ENCODE measurements at regions of chr11 and their contacts with region 1.

Region 1: DNA sequence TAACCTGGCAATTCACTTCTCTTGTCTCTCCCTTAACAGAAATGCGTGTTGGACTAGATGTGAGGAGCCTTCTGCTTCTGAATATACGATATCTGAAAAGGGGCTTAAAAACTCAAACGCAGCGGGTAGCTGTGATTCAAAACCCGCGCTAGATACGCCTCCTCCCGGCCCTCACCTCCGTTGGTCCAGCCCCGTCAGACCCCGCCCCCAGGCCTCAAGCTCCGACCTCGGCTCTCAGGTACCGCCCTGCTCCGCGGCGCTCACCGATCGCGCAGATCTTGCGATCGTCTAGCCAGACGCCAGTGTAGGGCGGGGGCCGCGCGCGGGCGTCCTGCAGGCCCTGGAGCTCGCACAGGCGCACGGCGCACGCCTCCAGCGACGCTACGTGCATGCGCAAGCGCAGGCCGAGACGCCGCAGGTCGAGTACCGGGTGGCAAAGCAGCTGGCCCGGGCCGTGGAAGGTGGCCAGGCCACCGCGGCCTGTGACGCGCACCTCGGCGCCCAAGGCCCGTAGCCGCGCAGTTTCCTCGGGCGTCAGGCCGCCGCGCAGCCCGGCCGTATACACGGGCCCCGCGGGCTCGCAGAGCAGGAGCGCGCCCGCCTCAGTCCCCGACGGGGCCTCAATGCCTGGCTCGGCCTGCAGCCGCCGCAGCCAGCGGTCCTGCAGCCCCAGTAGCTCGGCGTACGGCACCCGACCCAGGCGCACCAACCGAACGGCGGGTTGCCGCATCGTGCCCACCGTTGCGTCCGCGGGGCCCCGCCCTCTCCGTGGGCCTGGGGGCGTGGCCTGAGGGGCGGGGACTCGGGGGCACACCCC is at the start of gene LIPT2:
- DNase-seq: peak; percentile 99
- H3K4me3 ChIP-seq: peak within 1 kb of the TSS; percentile 84 to 99 (median 90)
- H3K27ac ChIP-seq: peak within 1 kb of the TSS; percentile 98 to 100 (median 99)
- H3K4me1 ChIP-seq: peaks cover 11 to 20% (median 14%) of the 10 kb centered on the region in 4 donors
- H3K27me3 ChIP-seq: no peaks in the 10 kb centered on the region
- CTCF ChIP-seq: peak in 1 of 3 experiments; percentile 17
- EP300 ChIP-seq: no peak
- POLR2A ChIP-seq: peak; percentile 37
- total RNA-seq, gene LIPT2: 2.2 to 6.7 (median 2.7) TPM

Region 2: DNA sequence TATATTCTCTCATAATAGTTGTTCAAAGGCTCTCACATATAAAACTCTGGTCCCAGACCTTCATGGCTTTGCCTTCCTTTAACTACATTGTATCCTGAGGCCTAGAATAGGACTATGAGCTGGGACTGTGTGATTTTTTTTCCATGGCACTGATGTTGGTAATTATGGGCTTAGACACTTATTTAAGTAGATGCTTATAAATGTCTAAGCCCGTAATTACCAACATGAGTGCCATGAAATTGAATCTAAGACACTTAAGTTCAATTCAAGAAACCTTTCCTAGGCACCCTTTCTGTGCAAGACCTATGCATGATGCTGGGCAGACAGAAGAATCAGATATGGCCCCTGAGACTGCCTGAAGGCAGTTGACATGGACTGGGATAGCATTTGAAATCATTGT is 244.7 kb before region 1 on chr11:
- intact Hi-C with region 1: no loop called
- DNase-seq: peak; percentile 47
- H3K4me3 ChIP-seq: no peak overlapping the region
- H3K27ac ChIP-seq: no peak overlapping the region
- H3K4me1 ChIP-seq: no peaks in the 10 kb centered on the region
- H3K27me3 ChIP-seq: no peaks in the 10 kb centered on the region
- CTCF ChIP-seq: no peak
- EP300 ChIP-seq: no peak
- POLR2A ChIP-seq: no peak

Region 3: DNA sequence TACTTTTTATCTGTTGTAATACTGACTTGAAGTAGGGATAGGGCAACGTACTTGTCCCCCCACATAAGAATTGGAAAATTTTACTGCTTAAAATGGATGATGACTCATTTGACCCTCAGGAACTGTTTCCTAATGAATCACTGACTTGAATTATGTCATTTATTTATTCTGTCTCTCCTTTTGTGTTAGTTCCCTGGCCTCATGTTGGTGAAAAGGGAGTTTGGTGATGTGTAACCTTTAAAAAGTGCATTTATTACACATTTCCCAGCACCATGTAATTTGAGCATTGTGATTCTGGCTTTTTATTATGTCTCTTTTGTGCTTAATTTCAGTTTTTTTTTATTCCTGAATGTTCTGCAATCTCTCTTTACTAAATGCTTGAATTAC is 74.7 kb before region 1 on chr11:
- intact Hi-C with region 1: no loop called
- DNase-seq: no peak
- H3K4me3 ChIP-seq: no peak overlapping the region
- H3K27ac ChIP-seq: peak overlapping the region; percentile 30 to 57 (median 48)
- H3K4me1 ChIP-seq: peaks cover 0 to 14% (median 12%) of the 10 kb centered on the region in 4 donors
- H3K27me3 ChIP-seq: no peaks in the 10 kb centered on the region
- CTCF ChIP-seq: no peak
- EP300 ChIP-seq: no peak
- POLR2A ChIP-seq: no peak

Region 4: DNA sequence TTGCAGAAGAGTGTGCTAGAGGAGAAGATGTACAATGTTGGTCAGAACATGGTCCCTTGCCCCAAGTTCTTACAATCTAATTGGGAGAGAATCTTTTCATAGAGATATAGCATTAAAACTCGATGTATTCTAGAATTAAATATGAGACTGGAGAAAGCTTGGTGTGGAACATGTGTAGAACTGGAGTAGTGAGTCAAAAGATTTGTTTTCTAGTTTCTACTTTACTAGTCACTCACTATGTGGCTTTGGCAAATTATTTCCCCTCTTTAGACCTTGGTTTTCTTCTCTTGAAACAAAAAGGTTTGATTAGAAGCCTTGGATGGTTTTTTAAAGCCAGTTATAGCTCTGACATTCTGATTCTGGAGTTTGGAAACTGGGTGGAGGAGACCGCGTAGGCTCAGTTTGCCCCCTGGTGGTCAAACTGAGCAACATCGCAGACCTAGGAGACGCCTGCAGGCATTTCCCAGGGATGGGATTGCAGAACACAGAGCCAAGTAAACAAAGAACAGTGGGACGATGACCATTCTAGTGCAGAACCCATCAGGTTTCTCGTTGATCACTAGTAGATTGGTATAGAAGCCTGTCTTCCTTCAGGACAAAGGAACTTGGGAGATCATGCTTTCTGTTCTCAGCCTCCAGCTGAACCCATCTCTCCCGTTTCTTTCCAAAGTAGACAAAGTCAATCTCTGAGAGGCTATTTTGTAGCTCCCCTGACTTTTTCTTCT is 246.5 kb after region 1 on chr11:
- intact Hi-C with region 1: loop called (anchors 10 kb)
- DNase-seq: no peak
- H3K4me3 ChIP-seq: no peak overlapping the region
- H3K27ac ChIP-seq: no peak overlapping the region
- H3K4me1 ChIP-seq: peaks cover 0 to 18% (median 14%) of the 10 kb centered on the region in 4 donors
- H3K27me3 ChIP-seq: peaks cover 0 to under 1% (median 0%) of the 10 kb centered on the region in 4 donors
- CTCF ChIP-seq: peak; percentile 91 to 94 (median 93)
- EP300 ChIP-seq: no peak
- POLR2A ChIP-seq: no peak